ENCODE measurements at regions of chr13 and their contacts with region 1.

Region 1: DNA sequence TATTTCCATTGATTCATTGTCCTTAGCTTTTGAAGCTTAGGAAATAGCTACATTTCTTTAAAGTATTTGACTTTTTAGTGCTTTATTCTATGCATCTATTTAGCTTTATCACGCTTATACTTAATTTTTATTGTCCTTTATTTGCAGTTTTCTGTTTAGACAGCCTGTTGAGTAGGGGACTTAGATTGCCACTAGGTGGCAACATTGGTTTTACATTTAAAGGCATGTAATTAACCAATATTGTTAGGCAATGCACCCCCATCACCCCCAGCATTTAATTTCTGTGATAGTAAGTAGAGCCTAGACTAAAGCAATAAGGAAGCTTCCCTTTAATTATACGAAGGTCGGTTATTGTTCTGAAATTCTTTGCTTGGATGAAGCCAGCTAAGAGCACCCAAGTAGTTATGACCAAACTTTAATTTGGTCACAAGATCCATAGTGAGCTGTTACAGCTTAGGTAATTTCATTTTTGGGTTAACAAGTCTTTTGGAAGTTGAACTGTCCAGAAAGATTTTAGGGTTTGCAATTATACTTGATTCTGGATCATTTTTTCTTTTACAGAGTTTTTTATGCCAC is 36.5 kb downstream of the B3GLCT start:
- DNase-seq: peak; percentile 51
- ATAC-seq: peak; percentile 81
- H3K4me3 ChIP-seq: no peak overlapping the region
- H3K27ac ChIP-seq: no peak overlapping the region
- H3K4me1 ChIP-seq: no peaks in the 10 kb centered on the region
- H3K27me3 ChIP-seq: no peaks in the 10 kb centered on the region
- CTCF ChIP-seq: peak; percentile 89

Region 2: GRCh38 chr13:30465585-30466357 is 770.5 kb before region 1 on chr13 and contains the start of gene HMGB1:
- CTCF ChIA-PET with region 1: no interaction called
- POLR2A ChIA-PET with region 1: no interaction called
- intact Hi-C with region 1: no loop called
- DNase-seq: peak; percentile 97
- ATAC-seq: peak; percentile 91
- H3K4me3 ChIP-seq: peak within 1 kb of the TSS; percentile 84
- H3K27ac ChIP-seq: peak within 1 kb of the TSS; percentile 70
- H3K4me1 ChIP-seq: peaks cover 24% of the 10 kb centered on the region
- H3K27me3 ChIP-seq: no peaks in the 10 kb centered on the region
- CTCF ChIP-seq: no peak
- total RNA-seq, gene HMGB1: 497 and 567 TPM in 2 replicates

Region 3: GRCh38 chr13:31174018-31174417 is 62.3 kb before region 1 on chr13:
- CTCF ChIA-PET with region 1: no interaction called
- POLR2A ChIA-PET with region 1: no interaction called
- intact Hi-C with region 1: loop called (anchors 1 kb)
- DNase-seq: peak; percentile 38
- ATAC-seq: peak; percentile 45
- H3K4me3 ChIP-seq: no peak overlapping the region
- H3K27ac ChIP-seq: no peak overlapping the region
- H3K4me1 ChIP-seq: peaks cover 29% of the 10 kb centered on the region
- H3K27me3 ChIP-seq: no peaks in the 10 kb centered on the region
- CTCF ChIP-seq: peak; percentile 45

Region 4: GRCh38 chr13:31199849-31200636 is 36.3 kb before region 1 on chr13 and contains the start of gene B3GLCT:
- CTCF ChIA-PET with region 1: no interaction called
- POLR2A ChIA-PET with region 1: no interaction called
- intact Hi-C with region 1: no loop called
- DNase-seq: peak; percentile 87
- ATAC-seq: peak; percentile 80
- H3K4me3 ChIP-seq: peak within 1 kb of the TSS; percentile 78
- H3K27ac ChIP-seq: no peak within 1 kb of the TSS
- H3K4me1 ChIP-seq: peaks cover 24% of the 10 kb centered on the region
- H3K27me3 ChIP-seq: no peaks in the 10 kb centered on the region
- CTCF ChIP-seq: peak; percentile 63
- total RNA-seq, gene B3GLCT: 3.2 TPM in 2 replicates

Region 5: GRCh38 chr13:31409678-31410356 is 173.5 kb after region 1 on chr13:
- CTCF ChIA-PET with region 1: no interaction called
- POLR2A ChIA-PET with region 1: no interaction called
- intact Hi-C with region 1: loop called (anchors 1 kb)
- DNase-seq: peak; percentile 11
- ATAC-seq: no peak
- H3K4me3 ChIP-seq: no peak overlapping the region
- H3K27ac ChIP-seq: no peak overlapping the region
- H3K4me1 ChIP-seq: no peaks in the 10 kb centered on the region
- H3K27me3 ChIP-seq: peaks cover 38% of the 10 kb centered on the region
- CTCF ChIP-seq: peak; percentile 49

Region 6: GRCh38 chr13:31424117-31424729 is 187.9 kb after region 1 on chr13:
- CTCF ChIA-PET with region 1: interaction called, 16 read pairs
- POLR2A ChIA-PET with region 1: interaction called, 6 read pairs
- intact Hi-C with region 1: loop called (anchors 1 kb)
- DNase-seq: peak; percentile 83
- ATAC-seq: peak; percentile 100
- H3K4me3 ChIP-seq: no peak overlapping the region
- H3K27ac ChIP-seq: no peak overlapping the region
- H3K4me1 ChIP-seq: 0 out of 2 replicates have a peak, but pooled peaks cover 4% of the 10 kb centered on the region
- H3K27me3 ChIP-seq: peaks cover 18% of the 10 kb centered on the region; the same call in 1 of the 2 replicates
- CTCF ChIP-seq: peak; percentile 90

Region 7: DNA sequence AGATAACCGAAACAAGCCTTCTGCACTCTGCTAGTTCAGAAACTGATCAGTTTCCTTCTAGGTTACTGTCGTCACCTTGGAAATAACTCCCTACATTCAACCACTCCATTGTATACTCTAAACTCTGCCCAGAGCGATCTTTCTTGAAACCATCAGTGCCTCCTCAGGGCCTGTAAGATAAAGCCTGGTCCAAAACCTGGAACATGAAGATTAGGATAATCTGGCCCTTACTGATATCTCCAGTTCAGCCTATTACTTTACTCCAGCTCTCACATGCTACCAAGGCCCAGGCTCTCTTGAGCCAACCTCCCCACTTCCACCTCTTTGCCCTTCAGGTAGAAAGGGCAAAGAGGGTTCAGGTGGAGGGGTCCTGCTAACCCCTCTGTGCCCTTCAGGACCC is 377.8 kb after region 1 on chr13:
- CTCF ChIA-PET with region 1: no interaction called
- POLR2A ChIA-PET with region 1: no interaction called
- intact Hi-C with region 1: no loop called
- DNase-seq: no peak
- ATAC-seq: no peak
- H3K4me3 ChIP-seq: no peak overlapping the region
- H3K27ac ChIP-seq: no peak overlapping the region
- H3K4me1 ChIP-seq: no peaks in the 10 kb centered on the region
- H3K27me3 ChIP-seq: no peaks in the 10 kb centered on the region
- CTCF ChIP-seq: no peak

Region 8: DNA sequence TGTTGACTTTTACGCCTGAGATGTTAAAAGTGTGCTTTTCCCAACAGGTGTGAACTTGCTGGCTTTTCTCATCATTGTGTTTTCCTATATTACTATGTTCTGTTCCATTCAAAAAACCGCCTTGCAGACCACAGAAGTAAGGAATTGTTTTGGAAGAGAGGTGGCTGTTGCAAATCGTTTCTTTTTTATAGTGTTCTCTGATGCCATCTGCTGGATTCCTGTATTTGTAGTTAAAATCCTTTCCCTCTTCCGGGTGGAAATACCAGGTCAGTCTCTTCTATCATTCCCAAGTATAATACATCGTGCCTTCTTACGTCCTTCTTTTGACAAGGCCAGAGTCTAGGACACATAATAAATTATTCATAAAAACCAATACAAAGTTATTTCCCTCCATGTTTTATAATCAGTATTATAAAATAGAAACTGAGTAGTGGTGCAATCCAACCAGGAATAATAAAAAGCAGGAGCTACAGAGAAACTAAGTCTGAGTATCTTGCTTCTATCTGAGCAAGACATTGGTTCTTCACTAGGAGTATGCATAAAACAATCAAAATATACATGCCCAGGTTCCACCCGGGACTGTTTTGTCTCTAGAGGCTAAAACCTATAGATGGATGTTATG is 561.0 kb after region 1 on chr13:
- CTCF ChIA-PET with region 1: no interaction called
- POLR2A ChIA-PET with region 1: no interaction called
- intact Hi-C with region 1: loop called (anchors 2 kb)
- DNase-seq: peak; percentile 52
- ATAC-seq: peak; percentile 51
- H3K4me3 ChIP-seq: no peak overlapping the region
- H3K27ac ChIP-seq: no peak overlapping the region
- H3K4me1 ChIP-seq: peaks cover 13% of the 10 kb centered on the region
- H3K27me3 ChIP-seq: peaks cover 18% of the 10 kb centered on the region
- CTCF ChIP-seq: peak; percentile 58